ENCODE measurements at regions of chr1 and their contacts with region 1.

Region 1: DNA sequence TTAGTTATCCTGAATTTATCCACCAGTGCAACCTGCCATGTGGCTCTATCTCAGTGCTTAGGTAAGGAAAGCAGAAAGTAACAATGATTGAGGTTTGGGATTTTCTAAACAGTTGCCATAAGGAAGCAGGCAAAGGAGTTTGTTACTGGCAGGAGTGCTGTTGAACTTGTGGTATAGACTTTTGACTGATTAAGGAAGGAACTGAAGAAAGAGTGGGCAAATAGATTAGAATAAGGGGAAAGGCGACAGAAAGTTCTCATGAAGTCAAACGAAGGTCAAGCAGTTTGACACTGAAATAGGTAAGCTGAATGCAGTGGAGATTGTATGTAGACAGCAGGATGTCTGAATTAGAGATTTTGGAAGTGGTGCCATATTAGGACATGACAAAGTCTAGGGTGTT is 24.2 kb upstream of the CR2 start:
- DNase-seq: no peak
- ATAC-seq: peak; percentile 19
- H3K4me3 Mint-ChIP-seq: peak overlapping the region; percentile 15
- H3K27ac Mint-ChIP-seq: peak overlapping the region; percentile 74
- H3K4me1 Mint-ChIP-seq: peaks cover 87% of the 10 kb centered on the region
- H3K27me3 Mint-ChIP-seq: no peaks in the 10 kb centered on the region
- CTCF ChIP-seq: no peak

Region 2: GRCh38 chr1:207234690-207235089 is 195.3 kb before region 1 on chr1:
- CTCF ChIA-PET with region 1: no interaction called
- POLR2A ChIA-PET with region 1: no interaction called
- intact Hi-C with region 1: no loop called
- DNase-seq: no peak
- ATAC-seq: no peak
- H3K4me3 Mint-ChIP-seq: no peak overlapping the region
- H3K27ac Mint-ChIP-seq: no peak overlapping the region
- H3K4me1 Mint-ChIP-seq: no peaks in the 10 kb centered on the region
- H3K27me3 Mint-ChIP-seq: peaks cover 4% of the 10 kb centered on the region
- CTCF ChIP-seq: no peak

Region 3: DNA sequence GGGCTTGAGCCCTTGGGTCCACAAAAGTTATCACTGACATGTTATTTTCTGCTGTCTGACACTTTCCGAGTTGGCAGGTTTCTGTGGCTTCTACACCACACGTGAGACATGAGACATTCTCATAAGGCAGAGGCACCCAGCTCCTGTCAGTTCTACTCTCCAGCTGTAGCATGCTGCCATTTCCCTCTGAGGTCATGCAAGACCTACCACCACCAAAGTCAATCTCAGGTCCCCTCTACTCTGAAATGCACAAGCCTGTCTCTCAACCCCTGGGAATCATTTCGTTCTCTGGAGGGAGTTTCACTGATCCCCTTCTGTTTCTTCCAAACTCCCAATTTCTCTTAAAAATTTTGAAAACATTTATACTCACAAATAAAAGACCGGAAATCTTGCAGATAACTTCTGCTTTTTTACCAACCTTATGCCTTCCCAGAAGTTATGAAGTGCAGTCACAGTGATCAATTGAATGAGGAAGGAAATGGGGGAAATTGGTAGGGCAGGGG is 15.3 kb before region 1 on chr1:
- CTCF ChIA-PET with region 1: interaction called, 5 read pairs
- POLR2A ChIA-PET with region 1: interaction called, 28 read pairs
- intact Hi-C with region 1: loop called (anchors 1 kb)
- DNase-seq: no peak
- ATAC-seq: peak; percentile 76
- H3K4me3 Mint-ChIP-seq: peak overlapping the region; percentile 76
- H3K27ac Mint-ChIP-seq: peak overlapping the region; percentile 96
- H3K4me1 Mint-ChIP-seq: peaks cover 83% of the 10 kb centered on the region
- H3K27me3 Mint-ChIP-seq: no peaks in the 10 kb centered on the region
- CTCF ChIP-seq: no peak

Region 4: DNA sequence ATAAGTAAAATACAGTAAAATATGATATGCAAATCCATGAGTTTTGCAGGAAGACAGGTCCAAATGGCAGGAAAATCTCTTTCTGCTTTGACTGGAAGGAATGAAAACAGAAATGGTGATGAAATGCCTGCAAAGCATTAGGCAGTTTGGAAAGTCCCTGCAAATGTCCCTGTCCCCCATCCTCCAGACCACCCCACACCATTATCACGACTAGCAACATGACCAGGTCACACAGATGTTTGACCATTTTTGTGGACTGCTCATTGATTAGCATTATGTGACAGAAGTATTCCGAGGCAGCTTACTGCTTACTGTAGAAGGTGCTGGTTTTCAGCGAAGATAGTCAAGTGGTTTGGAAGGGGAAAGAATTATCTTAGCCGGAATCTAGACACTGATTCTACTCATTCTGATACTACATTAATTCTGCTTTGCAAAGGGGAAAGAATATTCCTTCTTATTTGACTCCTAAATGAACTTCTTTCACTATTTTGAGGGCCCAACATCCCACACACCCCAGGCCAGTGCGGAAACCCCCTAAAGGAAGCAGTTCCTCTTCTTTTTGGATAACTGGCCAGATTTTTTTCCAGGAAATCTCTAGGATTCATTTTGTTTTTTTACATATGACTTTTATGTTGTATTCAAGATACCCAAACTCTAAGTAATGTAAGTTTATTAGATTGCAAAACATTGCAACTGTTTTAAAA is 14.7 kb after region 1 on chr1:
- CTCF ChIA-PET with region 1: interaction called, 4 read pairs
- POLR2A ChIA-PET with region 1: interaction called, 5 read pairs
- intact Hi-C with region 1: loop called (anchors 2 kb)
- DNase-seq: no peak
- ATAC-seq: no peak
- H3K4me3 Mint-ChIP-seq: no peak overlapping the region
- H3K27ac Mint-ChIP-seq: no peak overlapping the region
- H3K4me1 Mint-ChIP-seq: peaks cover 18% of the 10 kb centered on the region
- H3K27me3 Mint-ChIP-seq: no peaks in the 10 kb centered on the region
- CTCF ChIP-seq: no peak